Activated T-helper 2 cell treated with anti-CD3 and anti-CD28 coated beads, Interferon-gamma antibody, Interleukin-2, Interleukin-4, amounts not matched to agents 10 μg/mL and 5 μg/mL and 100 μg/mL, durations not matched to agents 14 hours and 24 hours and 36 hours (primary cell): ENCODE measurements at regions of chr12 and their contacts with region 1.

Region 1: DNA sequence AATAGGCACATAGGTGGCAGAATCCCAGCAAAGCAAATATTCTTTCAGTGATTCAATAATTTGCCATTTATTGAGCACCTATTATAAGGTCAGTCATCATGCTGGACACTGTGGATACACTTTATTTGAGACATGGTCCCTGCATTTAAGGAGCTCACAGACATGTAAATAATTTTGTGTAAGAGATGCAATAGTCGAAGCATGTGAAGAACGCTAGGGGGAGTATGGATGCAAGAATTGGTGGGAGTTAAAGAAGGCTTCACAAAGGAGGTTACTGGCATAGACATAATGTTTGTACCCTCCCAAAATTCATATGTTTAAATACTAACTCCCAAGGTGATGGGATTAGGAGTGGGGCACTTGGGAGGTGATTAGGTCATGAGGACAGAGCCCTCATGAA is 260.6 kb upstream of the GARIN6 start:
- DNase-seq: no peak
- H3K4me3 Mint-ChIP-seq: no peak overlapping the region
- H3K27ac Mint-ChIP-seq: no peak overlapping the region
- H3K4me1 Mint-ChIP-seq: no peaks in the 10 kb centered on the region
- H3K27me3 Mint-ChIP-seq: no peaks in the 10 kb centered on the region

Region 2: GRCh38 chr12:99619389-99620158 is 232.7 kb after region 1 on chr12:
- intact Hi-C with region 1: loop called (anchors 5 kb)
- DNase-seq: no peak
- H3K4me3 Mint-ChIP-seq: no peak overlapping the region
- H3K27ac Mint-ChIP-seq: no peak overlapping the region
- H3K4me1 Mint-ChIP-seq: no peaks in the 10 kb centered on the region
- H3K27me3 Mint-ChIP-seq: no peaks in the 10 kb centered on the region

Region 3: GRCh38 chr12:100437038-100437841 is 1050.3 kb after region 1 on chr12:
- intact Hi-C with region 1: no loop called
- DNase-seq: no peak
- H3K4me3 Mint-ChIP-seq: no peak overlapping the region
- H3K27ac Mint-ChIP-seq: peak overlapping the region; percentile 34
- H3K4me1 Mint-ChIP-seq: peaks cover 13% of the 10 kb centered on the region
- H3K27me3 Mint-ChIP-seq: peaks cover 4% of the 10 kb centered on the region